ENCODE measurements at regions of chr3 and their contacts with region 1.

Region 1: GRCh38 chr3:42229942-42230688 is 35.9 kb downstream of the CCK start:
- DNase-seq: no peak
- H3K4me3 ChIP-seq: peak overlapping the region in 2 of 4 donors; percentile 11 to 19
- H3K27ac ChIP-seq: no peak overlapping the region
- H3K4me1 ChIP-seq: peaks cover 0 to 10% (median 3%) of the 10 kb centered on the region in 4 donors
- H3K27me3 ChIP-seq: no peaks in the 10 kb centered on the region
- CTCF ChIP-seq: peak; percentile 10 to 46 (median 38)
- EP300 ChIP-seq: no peak
- POLR2A ChIP-seq: no peak

Region 2: DNA sequence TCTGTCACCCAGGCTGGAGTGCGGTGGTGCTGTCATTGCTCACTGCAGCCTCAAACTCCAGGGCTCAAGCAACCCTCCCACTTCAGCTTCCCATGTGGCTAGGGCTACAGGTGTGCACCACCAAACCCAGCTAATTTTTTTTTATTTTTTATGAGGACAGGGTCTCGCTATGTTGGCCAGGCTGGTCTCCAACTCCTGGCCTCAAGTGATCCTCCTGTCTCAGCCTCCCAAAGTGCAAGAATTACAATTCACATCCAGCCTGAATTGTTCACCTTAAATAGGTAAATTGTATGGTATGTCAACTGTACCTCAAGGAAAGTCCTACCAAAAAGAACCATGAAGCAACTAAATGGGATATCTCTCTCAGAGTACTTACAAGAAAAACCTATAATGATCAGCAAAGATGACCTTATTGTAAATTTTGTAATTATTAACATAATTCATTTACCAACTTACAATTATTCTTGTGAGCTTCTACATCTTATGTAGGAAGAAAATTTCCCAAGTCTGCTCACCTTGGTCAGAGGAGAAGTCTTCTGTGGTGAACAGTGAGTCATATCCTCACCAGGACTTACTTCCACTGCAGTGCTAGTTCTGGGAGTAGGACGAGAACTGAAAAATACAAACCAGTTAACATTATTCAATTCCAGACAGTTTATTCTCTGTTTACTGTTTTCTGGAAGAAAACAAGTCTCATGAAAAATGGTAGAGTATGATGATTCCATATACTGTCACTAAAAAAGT is 322.6 kb before region 1 on chr3:
- intact Hi-C with region 1: no loop called
- DNase-seq: no peak
- H3K4me3 ChIP-seq: no peak overlapping the region
- H3K27ac ChIP-seq: no peak overlapping the region
- H3K4me1 ChIP-seq: no peaks in the 10 kb centered on the region
- H3K27me3 ChIP-seq: no peaks in the 10 kb centered on the region
- CTCF ChIP-seq: no peak
- EP300 ChIP-seq: no peak
- POLR2A ChIP-seq: no peak

Region 3: DNA sequence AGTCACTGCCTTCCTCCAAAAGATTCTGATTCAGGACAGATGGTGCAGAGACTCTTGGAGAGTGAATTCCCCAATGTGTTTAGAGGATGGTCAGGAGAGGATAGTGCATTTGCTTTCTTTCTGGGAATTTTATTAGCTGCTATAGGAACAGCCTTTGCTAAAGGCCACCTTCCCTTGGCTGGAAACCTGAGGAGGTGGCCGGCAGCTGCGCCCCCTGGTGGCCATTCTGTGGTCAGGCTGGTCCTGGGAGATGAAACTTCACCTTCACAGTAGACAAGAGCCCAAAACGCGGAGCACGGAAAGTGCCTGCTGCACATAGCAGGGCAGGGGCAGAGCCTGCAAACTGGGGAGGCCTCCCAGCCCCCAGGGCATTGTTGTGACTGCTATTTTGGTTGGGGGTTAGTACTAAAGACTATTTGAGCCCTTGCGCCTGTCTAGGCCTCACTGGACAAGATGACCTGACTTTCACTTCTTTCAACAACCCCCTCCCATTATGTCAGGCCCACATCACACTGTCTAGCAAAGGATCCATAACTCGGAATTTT is 317.4 kb after region 1 on chr3:
- intact Hi-C with region 1: loop called (anchors 5 kb)
- DNase-seq: peak; percentile 78
- H3K4me3 ChIP-seq: no peak overlapping the region
- H3K27ac ChIP-seq: no peak overlapping the region
- H3K4me1 ChIP-seq: peaks cover 0 to 18% (median 4%) of the 10 kb centered on the region in 4 donors
- H3K27me3 ChIP-seq: no peaks in the 10 kb centered on the region
- CTCF ChIP-seq: peak; percentile 61 to 95 (median 78)
- EP300 ChIP-seq: no peak
- POLR2A ChIP-seq: no peak

Region 4: GRCh38 chr3:42749753-42750231 is 519.7 kb after region 1 on chr3:
- intact Hi-C with region 1: no loop called
- DNase-seq: no peak
- H3K4me3 ChIP-seq: no peak overlapping the region
- H3K27ac ChIP-seq: peak overlapping the region; percentile 80 to 90 (median 84)
- H3K4me1 ChIP-seq: peaks cover 0 to 68% (median 60%) of the 10 kb centered on the region in 4 donors
- H3K27me3 ChIP-seq: no peaks in the 10 kb centered on the region
- CTCF ChIP-seq: peak in 3 of 4 experiments; percentile 12 to 51 (median 42)
- EP300 ChIP-seq: no peak
- POLR2A ChIP-seq: no peak